ENCODE measurements at regions of chr14 and their contacts with region 1.

Region 1: GRCh38 chr14:54805521-54806322 is 96.9 kb downstream of the GCH1 start:
- DNase-seq: peak; percentile 81 to 91 (median 82)
- ATAC-seq: peak; percentile 82 to 94 (median 90)
- H3K4me3 ChIP-seq: peak overlapping the region in 8 of 12 donors; percentile 1 to 34 (median 16)
- H3K27ac ChIP-seq: no peak overlapping the region
- H3K4me1 ChIP-seq: peaks cover 0 to 11% (median 4%) of the 10 kb centered on the region in 12 donors
- H3K27me3 ChIP-seq: no peaks in the 10 kb centered on the region
- CTCF ChIP-seq: peak; percentile 91 to 98 (median 96)
- POLR2A ChIP-seq: no peak

Region 2: GRCh38 chr14:54509546-54510501 is 295.9 kb before region 1 on chr14 and contains the start of gene CGRRF1:
- intact Hi-C with region 1: loop called in 1 of 10 experiments (anchors 2 kb)
- DNase-seq: peak; percentile 99 to 100 (median 99)
- ATAC-seq: peak; percentile 99 to 100 (median 99)
- H3K4me3 ChIP-seq: peak within 1 kb of the TSS; percentile 66 to 99 (median 78)
- H3K27ac ChIP-seq: peak within 1 kb of the TSS; percentile 45 to 92 (median 77)
- H3K4me1 ChIP-seq: peaks cover 0 to 44% (median 28%) of the 10 kb centered on the region in 12 donors
- H3K27me3 ChIP-seq: no peaks in the 10 kb centered on the region
- CTCF ChIP-seq: peak; percentile 70 to 95 (median 82)
- POLR2A ChIP-seq: peak in 1 of 2 donors; percentile 71
- total RNA-seq, gene CGRRF1: 10.6 to 28.2 (median 16.6) TPM

Region 3: GRCh38 chr14:54768501-54769129 is 37.1 kb before region 1 on chr14:
- intact Hi-C with region 1: no loop called
- DNase-seq: no peak
- ATAC-seq: no peak
- H3K4me3 ChIP-seq: no peak overlapping the region
- H3K27ac ChIP-seq: peak overlapping the region in 11 of 12 donors; percentile 2 to 96 (median 91)
- H3K4me1 ChIP-seq: peaks cover 0 to 68% (median 34%) of the 10 kb centered on the region in 12 donors
- H3K27me3 ChIP-seq: no peaks in the 10 kb centered on the region
- CTCF ChIP-seq: no peak
- POLR2A ChIP-seq: no peak

Region 4: GRCh38 chr14:54893151-54893760 is 87.5 kb after region 1 on chr14:
- intact Hi-C with region 1: loop called in 4 of 10 experiments (anchors 5 to 10 kb)
- DNase-seq: no peak
- ATAC-seq: peak in 2 of 4 donors; percentile 45 to 46
- H3K4me3 ChIP-seq: no peak overlapping the region
- H3K27ac ChIP-seq: no peak overlapping the region
- H3K4me1 ChIP-seq: peaks cover 0 to 26% (median 0%) of the 10 kb centered on the region in 12 donors
- H3K27me3 ChIP-seq: no peaks in the 10 kb centered on the region
- CTCF ChIP-seq: peak; percentile 65 to 84 (median 77)
- POLR2A ChIP-seq: no peak

Region 5: DNA sequence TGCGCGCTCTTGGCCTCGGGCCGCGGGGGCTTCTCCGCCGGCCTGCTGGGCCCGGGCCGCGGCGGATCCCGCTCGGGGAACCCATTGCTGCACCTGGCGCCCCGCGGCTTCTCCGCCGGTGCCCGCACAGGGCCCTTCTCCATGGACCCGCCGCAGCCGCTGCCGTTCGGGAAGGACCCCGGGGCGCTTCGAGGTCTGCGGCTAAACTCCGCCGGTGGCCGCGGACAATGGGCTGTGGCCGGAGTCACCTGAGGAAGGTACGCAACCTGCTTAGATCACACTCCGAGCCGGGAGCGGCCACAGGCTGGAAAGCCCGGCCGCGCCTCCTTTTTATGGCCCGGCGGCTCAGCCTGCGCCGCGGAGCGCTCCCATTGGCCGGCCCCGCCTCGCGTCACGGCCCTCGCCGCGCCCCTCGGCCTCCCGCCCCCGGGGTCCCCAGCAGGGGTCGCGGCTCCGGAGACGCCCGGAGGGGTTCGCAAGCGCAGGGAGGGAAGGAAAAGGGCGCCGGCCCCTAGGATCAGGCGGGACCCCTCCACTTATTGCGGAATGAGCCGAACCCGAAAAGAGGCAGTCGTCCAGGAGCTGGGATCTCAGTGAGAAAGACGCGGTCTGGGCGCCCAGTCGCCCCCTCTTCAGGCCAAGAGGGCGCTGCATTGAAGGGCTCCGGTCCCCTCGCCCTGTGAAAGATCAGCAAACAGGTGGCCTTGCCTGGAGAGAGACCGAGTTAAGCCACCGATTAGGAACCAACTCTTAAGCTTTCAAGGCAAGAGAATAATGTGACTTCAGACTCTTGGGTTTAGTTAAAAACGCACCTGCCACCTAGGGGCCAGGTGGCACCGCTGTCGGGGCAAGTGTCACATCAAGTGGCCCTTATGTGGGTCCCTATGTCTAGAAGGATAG is 97.0 kb after region 1 on chr14 and contains the start of gene GCH1:
- intact Hi-C with region 1: loop called in 4 of 10 experiments (anchors 5 to 10 kb)
- DNase-seq: peak; percentile 59 to 85 (median 76)
- ATAC-seq: peak; percentile 85 to 97 (median 93)
- H3K4me3 ChIP-seq: peak within 1 kb of the TSS; percentile 61 to 97 (median 82)
- H3K27ac ChIP-seq: peak within 1 kb of the TSS; percentile 62 to 91 (median 82)
- H3K4me1 ChIP-seq: peaks cover 0 to 29% (median 1%) of the 10 kb centered on the region in 12 donors
- H3K27me3 ChIP-seq: no peaks in the 10 kb centered on the region
- CTCF ChIP-seq: peak; percentile 36 to 75 (median 54)
- POLR2A ChIP-seq: peak in 1 of 2 donors; percentile 78
- total RNA-seq, gene GCH1: 1.6 to 13.8 (median 3.7) TPM

Region 6: DNA sequence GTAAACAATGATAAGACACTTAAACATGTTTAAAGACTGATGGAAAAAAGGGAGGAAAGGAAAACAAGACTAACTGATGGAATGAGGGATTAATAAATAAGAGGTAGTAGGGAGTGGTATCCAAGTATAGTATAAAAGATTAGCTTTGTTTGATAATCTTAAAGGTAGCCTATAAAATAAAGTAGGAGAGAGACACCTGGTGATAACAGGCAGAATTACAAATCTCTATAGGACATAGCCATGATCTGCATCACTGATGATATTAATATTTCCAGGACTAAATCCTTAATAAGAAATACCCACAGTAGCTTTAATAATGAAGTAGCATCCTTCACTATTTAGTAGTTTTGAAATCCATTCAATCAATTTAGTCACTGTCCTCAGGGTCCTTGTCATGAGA is 355.3 kb after region 1 on chr14:
- intact Hi-C with region 1: loop called in 1 of 10 experiments (anchors 10 kb)
- DNase-seq: no peak
- ATAC-seq: peak; percentile 58 to 69 (median 62)
- H3K4me3 ChIP-seq: no peak overlapping the region
- H3K27ac ChIP-seq: no peak overlapping the region
- H3K4me1 ChIP-seq: peaks cover 0 to 5% (median 0%) of the 10 kb centered on the region in 12 donors
- H3K27me3 ChIP-seq: no peaks in the 10 kb centered on the region
- CTCF ChIP-seq: peak; percentile 52 to 80 (median 67)
- POLR2A ChIP-seq: no peak

Measured in heart left ventricle (tissue), 16 donors.